ENCODE measurements at regions of chr11 and their contacts with region 1.

Region 1: GRCh38 chr11:37988031-37988430 is 1390.0 kb upstream of the RAG2 start:
- DNase-seq: no peak
- H3K4me3 ChIP-seq: no peak overlapping the region
- H3K27ac ChIP-seq: no peak overlapping the region
- H3K4me1 ChIP-seq: no peaks in the 10 kb centered on the region
- H3K27me3 ChIP-seq: no peaks in the 10 kb centered on the region
- CTCF ChIP-seq: no peak
- POLR2A ChIP-seq: no peak

Region 2: GRCh38 chr11:37560346-37560745 is 427.7 kb before region 1 on chr11:
- intact Hi-C with region 1: loop called (anchors 10 kb)
- DNase-seq: no peak
- H3K4me3 ChIP-seq: no peak overlapping the region
- H3K27ac ChIP-seq: no peak overlapping the region
- H3K4me1 ChIP-seq: no peaks in the 10 kb centered on the region
- H3K27me3 ChIP-seq: no peaks in the 10 kb centered on the region
- CTCF ChIP-seq: no peak
- POLR2A ChIP-seq: no peak

Measured in breast epithelium (tissue), 4 donors.